ENCODE measurements at regions of chr9 and their contacts with region 1.

Region 1: GRCh38 chr9:71285191-71285656 is 163.8 kb upstream of the TRPM3 start:
- DNase-seq: peak in 1 of 2 experiments; percentile 65
- H3K4me3 ChIP-seq: no peak overlapping the region
- H3K27ac ChIP-seq: no peak overlapping the region
- H3K4me1 ChIP-seq: peaks cover 0 to 5% (median 3%) of the 10 kb centered on the region in 4 experiments; a peak in 3 of 7 replicates
- H3K27me3 ChIP-seq: no peaks in the 10 kb centered on the region
- CTCF ChIP-seq: peak in 2 of 3 experiments; percentile 70 to 92; a peak in 2 of 4 replicates
- EP300 ChIP-seq: no peak
- POLR2A ChIP-seq: no peak
- RAD21 ChIP-seq: peak; percentile 92

Region 2: GRCh38 chr9:71223953-71224538 is 61.2 kb before region 1 on chr9:
- CTCF ChIA-PET with region 1: no interaction called
- POLR2A ChIA-PET with region 1: no interaction called
- DNase-seq: no peak
- H3K4me3 ChIP-seq: no peak overlapping the region
- H3K27ac ChIP-seq: no peak overlapping the region
- H3K4me1 ChIP-seq: no peaks in the 10 kb centered on the region; a peak in 1 of 7 replicates
- H3K27me3 ChIP-seq: no peaks in the 10 kb centered on the region
- CTCF ChIP-seq: peak in 2 of 3 experiments; percentile 55 to 58; a peak in 3 of 4 replicates
- EP300 ChIP-seq: no peak
- POLR2A ChIP-seq: no peak
- RAD21 ChIP-seq: peak; percentile 84 to 88

Region 3: DNA sequence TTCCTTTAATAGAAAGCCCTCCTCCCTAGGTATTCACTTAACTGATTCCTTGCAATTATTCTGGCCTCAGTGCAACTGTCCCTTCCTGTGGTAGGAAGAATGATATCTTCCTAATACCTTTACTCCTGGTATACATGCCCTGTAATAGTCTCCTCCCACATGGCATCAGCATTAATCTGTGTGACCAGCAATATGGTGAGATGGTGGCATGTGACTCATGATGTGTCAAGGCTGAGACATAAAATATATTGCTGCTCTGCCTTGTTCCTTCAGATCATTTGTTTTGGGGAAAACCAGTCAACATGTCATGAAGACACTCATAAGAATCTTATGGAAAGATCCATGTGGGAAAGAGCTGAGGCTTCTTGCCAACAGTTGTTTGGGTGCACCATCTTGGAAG is 14.7 kb before region 1 on chr9:
- CTCF ChIA-PET with region 1: interaction called, 10 read pairs
- POLR2A ChIA-PET with region 1: no interaction called
- DNase-seq: no peak
- H3K4me3 ChIP-seq: no peak overlapping the region
- H3K27ac ChIP-seq: no peak overlapping the region
- H3K4me1 ChIP-seq: no peaks in the 10 kb centered on the region; a peak in 1 of 7 replicates
- H3K27me3 ChIP-seq: no peaks in the 10 kb centered on the region
- CTCF ChIP-seq: no peak
- EP300 ChIP-seq: no peak
- POLR2A ChIP-seq: no peak
- RAD21 ChIP-seq: no peak

Region 4: GRCh38 chr9:71295928-71296327 is 10.7 kb after region 1 on chr9:
- CTCF ChIA-PET with region 1: interaction called, 16 read pairs
- POLR2A ChIA-PET with region 1: no interaction called
- DNase-seq: no peak
- H3K4me3 ChIP-seq: no peak overlapping the region
- H3K27ac ChIP-seq: no peak overlapping the region
- H3K4me1 ChIP-seq: no peaks in the 10 kb centered on the region
- H3K27me3 ChIP-seq: no peaks in the 10 kb centered on the region
- CTCF ChIP-seq: no peak
- EP300 ChIP-seq: no peak
- POLR2A ChIP-seq: no peak
- RAD21 ChIP-seq: no peak

Region 5: GRCh38 chr9:71353720-71354119 is 68.5 kb after region 1 on chr9:
- CTCF ChIA-PET with region 1: interaction called, 21 read pairs
- POLR2A ChIA-PET with region 1: no interaction called
- DNase-seq: no peak
- H3K4me3 ChIP-seq: no peak overlapping the region
- H3K27ac ChIP-seq: no peak overlapping the region
- H3K4me1 ChIP-seq: no peaks in the 10 kb centered on the region
- H3K27me3 ChIP-seq: no peaks in the 10 kb centered on the region
- CTCF ChIP-seq: no peak
- EP300 ChIP-seq: no peak
- POLR2A ChIP-seq: no peak
- RAD21 ChIP-seq: no peak